ENCODE measurements at regions of chr22 and their contacts with region 1.

Region 1: GRCh38 chr22:46592390-46592872 is 27.8 kb upstream of the GRAMD4 start:
- DNase-seq: peak; percentile 64
- ATAC-seq: peak; percentile 45
- H3K4me3 Mint-ChIP-seq: peak overlapping the region; percentile 79
- H3K27ac Mint-ChIP-seq: peak overlapping the region; percentile 91
- H3K4me1 Mint-ChIP-seq: peaks cover 70% of the 10 kb centered on the region
- H3K27me3 Mint-ChIP-seq: no peaks in the 10 kb centered on the region
- CTCF ChIP-seq: no peak

Region 2: GRCh38 chr22:46476547-46476941 is 115.9 kb before region 1 on chr22:
- CTCF ChIA-PET with region 1: no interaction called
- POLR2A ChIA-PET with region 1: no interaction called
- intact Hi-C with region 1: loop called (anchors 1 kb)
- DNase-seq: no peak
- ATAC-seq: peak; percentile 90
- H3K4me3 Mint-ChIP-seq: no peak overlapping the region
- H3K27ac Mint-ChIP-seq: peak overlapping the region; percentile 79
- H3K4me1 Mint-ChIP-seq: peaks cover 23% of the 10 kb centered on the region
- H3K27me3 Mint-ChIP-seq: peaks cover 19% of the 10 kb centered on the region
- CTCF ChIP-seq: no peak

Region 3: GRCh38 chr22:46576556-46577367 is 15.7 kb before region 1 on chr22:
- CTCF ChIA-PET with region 1: no interaction called
- POLR2A ChIA-PET with region 1: interaction called, 44 read pairs
- intact Hi-C with region 1: loop called (anchors 1 kb)
- DNase-seq: peak; percentile 71
- ATAC-seq: peak; percentile 76
- H3K4me3 Mint-ChIP-seq: peak overlapping the region; percentile 83
- H3K27ac Mint-ChIP-seq: peak overlapping the region; percentile 82
- H3K4me1 Mint-ChIP-seq: peaks cover 57% of the 10 kb centered on the region
- H3K27me3 Mint-ChIP-seq: no peaks in the 10 kb centered on the region
- CTCF ChIP-seq: no peak

Region 4: GRCh38 chr22:46619830-46620501 is 27.5 kb after region 1 on chr22 and contains the start of gene GRAMD4:
- CTCF ChIA-PET with region 1: no interaction called
- POLR2A ChIA-PET with region 1: interaction called, 10 read pairs
- intact Hi-C with region 1: loop called (anchors 2 kb)
- DNase-seq: no peak
- ATAC-seq: no peak
- H3K4me3 Mint-ChIP-seq: no peak within 1 kb of the TSS
- H3K27ac Mint-ChIP-seq: peak within 1 kb of the TSS; percentile 24
- H3K4me1 Mint-ChIP-seq: peaks cover 54% of the 10 kb centered on the region
- H3K27me3 Mint-ChIP-seq: no peaks in the 10 kb centered on the region
- CTCF ChIP-seq: no peak
- total RNA-seq, gene GRAMD4: 39.3 and 45.6 TPM in 2 replicates

Region 5: DNA sequence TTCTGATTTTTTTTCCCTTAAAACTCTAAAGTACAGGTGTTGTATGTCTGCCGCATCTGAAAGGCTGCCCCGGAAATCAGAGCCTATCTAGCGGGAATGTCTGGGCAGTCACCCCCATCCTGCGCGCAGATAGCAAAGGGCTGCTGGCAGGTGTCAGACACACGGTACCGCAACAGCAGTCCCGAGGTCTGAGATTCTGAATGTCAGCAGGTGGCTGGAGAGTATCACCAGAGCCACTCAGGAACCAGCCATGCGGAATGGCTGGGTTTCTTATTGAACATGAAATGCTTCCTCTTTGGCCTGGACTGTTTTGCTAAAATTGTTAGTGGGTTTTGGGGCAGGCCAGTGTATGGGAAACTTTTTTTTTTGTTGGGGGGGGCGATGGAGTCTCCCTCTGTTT is 92.3 kb after region 1 on chr22:
- CTCF ChIA-PET with region 1: no interaction called
- POLR2A ChIA-PET with region 1: interaction called, 5 read pairs
- intact Hi-C with region 1: loop called (anchors 1 kb)
- DNase-seq: peak; percentile 51
- ATAC-seq: peak; percentile 92
- H3K4me3 Mint-ChIP-seq: peak overlapping the region; percentile 61
- H3K27ac Mint-ChIP-seq: peak overlapping the region; percentile 65
- H3K4me1 Mint-ChIP-seq: peaks cover 35% of the 10 kb centered on the region
- H3K27me3 Mint-ChIP-seq: no peaks in the 10 kb centered on the region
- CTCF ChIP-seq: no peak

Region 6: GRCh38 chr22:46762238-46763050 is 170.0 kb after region 1 on chr22 and contains the start of gene TBC1D22A:
- CTCF ChIA-PET with region 1: no interaction called
- POLR2A ChIA-PET with region 1: interaction called, 35 read pairs
- intact Hi-C with region 1: loop called (anchors 2 kb)
- DNase-seq: peak; percentile 93
- ATAC-seq: peak; percentile 72
- H3K4me3 Mint-ChIP-seq: peak within 1 kb of the TSS; percentile 99
- H3K27ac Mint-ChIP-seq: peak within 1 kb of the TSS; percentile 99
- H3K4me1 Mint-ChIP-seq: peaks cover 63% of the 10 kb centered on the region
- H3K27me3 Mint-ChIP-seq: no peaks in the 10 kb centered on the region
- CTCF ChIP-seq: no peak
- total RNA-seq, gene TBC1D22A: 73.0 and 85.9 TPM in 2 replicates

Region 7: GRCh38 chr22:46774253-46774979 is 182.0 kb after region 1 on chr22:
- CTCF ChIA-PET with region 1: no interaction called
- POLR2A ChIA-PET with region 1: interaction called, 16 read pairs
- intact Hi-C with region 1: loop called (anchors 2 kb)
- DNase-seq: peak; percentile 66
- ATAC-seq: peak; percentile 64
- H3K4me3 Mint-ChIP-seq: peak overlapping the region; percentile 72
- H3K27ac Mint-ChIP-seq: peak overlapping the region; percentile 89
- H3K4me1 Mint-ChIP-seq: peaks cover 93% of the 10 kb centered on the region
- H3K27me3 Mint-ChIP-seq: no peaks in the 10 kb centered on the region
- CTCF ChIP-seq: no peak

Measured in activated B cell treated with CpG ODN at 0.5 μM for 24 hours (primary cell).